Endothelial cell of umbilical vein (primary cell): ENCODE measurements at regions of chr2 and their contacts with region 1.

Region 1: GRCh38 chr2:224837558-224837957 is 121.4 kb upstream of the CCDC195 start:
- DNase-seq: peak; percentile 95
- H3K4me3 ChIP-seq: peak overlapping the region in 1 of 3 experiments; percentile 49
- H3K27ac ChIP-seq: peak overlapping the region; percentile 100
- H3K4me1 ChIP-seq: peaks cover 29% of the 10 kb centered on the region
- H3K27me3 ChIP-seq: no peaks in the 10 kb centered on the region
- CTCF ChIP-seq: peak; percentile 1 to 10
- POLR2A ChIP-seq: peak; percentile 65

Region 2: GRCh38 chr2:224407241-224407701 is 430.3 kb before region 1 on chr2:
- CTCF ChIA-PET with region 1: no interaction called
- POLR2A ChIA-PET with region 1: no interaction called
- dilution Hi-C with region 1: no loop called
- intact Hi-C with region 1: loop called (anchors 1 kb)
- DNase-seq: peak; percentile 100
- H3K4me3 ChIP-seq: no peak overlapping the region
- H3K27ac ChIP-seq: peak overlapping the region; percentile 96
- H3K4me1 ChIP-seq: peaks cover 43% of the 10 kb centered on the region
- H3K27me3 ChIP-seq: no peaks in the 10 kb centered on the region
- CTCF ChIP-seq: no peak
- POLR2A ChIP-seq: peak; percentile 65

Region 3: GRCh38 chr2:224691563-224691962 is 146.0 kb before region 1 on chr2:
- CTCF ChIA-PET with region 1: no interaction called
- POLR2A ChIA-PET with region 1: no interaction called
- dilution Hi-C with region 1: no loop called
- intact Hi-C with region 1: no loop called
- DNase-seq: no peak
- H3K4me3 ChIP-seq: no peak overlapping the region
- H3K27ac ChIP-seq: no peak overlapping the region
- H3K4me1 ChIP-seq: no peaks in the 10 kb centered on the region
- H3K27me3 ChIP-seq: no peaks in the 10 kb centered on the region
- CTCF ChIP-seq: no peak
- POLR2A ChIP-seq: no peak

Region 4: DNA sequence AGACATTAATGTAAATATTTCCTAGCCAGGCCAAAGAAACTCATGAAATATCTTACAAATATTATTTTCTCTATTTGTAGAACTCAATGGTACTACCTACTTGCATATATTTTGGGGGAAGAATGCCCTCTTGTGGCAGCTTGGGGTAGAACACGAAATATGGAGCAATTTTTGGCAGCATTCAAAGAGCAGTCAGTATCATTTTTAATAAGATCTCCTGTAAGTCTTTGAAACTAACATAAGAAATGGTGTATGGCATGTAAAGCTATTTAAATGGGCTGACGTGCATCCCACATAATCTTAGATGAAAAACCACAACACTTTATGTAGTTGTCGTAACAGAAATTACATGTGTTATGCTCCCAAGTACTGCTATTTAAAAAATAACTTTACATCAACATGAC is 59.1 kb before region 1 on chr2:
- CTCF ChIA-PET with region 1: interaction called, 3 read pairs
- POLR2A ChIA-PET with region 1: no interaction called
- dilution Hi-C with region 1: no loop called
- intact Hi-C with region 1: loop called (anchors 1 kb)
- DNase-seq: peak; percentile 83
- H3K4me3 ChIP-seq: no peak overlapping the region
- H3K27ac ChIP-seq: no peak overlapping the region
- H3K4me1 ChIP-seq: no peaks in the 10 kb centered on the region
- H3K27me3 ChIP-seq: no peaks in the 10 kb centered on the region
- CTCF ChIP-seq: peak; percentile 55 to 61
- POLR2A ChIP-seq: no peak

Region 5: GRCh38 chr2:224816816-224817215 is 20.7 kb before region 1 on chr2:
- CTCF ChIA-PET with region 1: interaction called, 18 read pairs
- POLR2A ChIA-PET with region 1: interaction called, 5 read pairs
- dilution Hi-C with region 1: no loop called
- intact Hi-C with region 1: loop called (anchors 1 kb)
- DNase-seq: peak; percentile 62
- H3K4me3 ChIP-seq: no peak overlapping the region
- H3K27ac ChIP-seq: peak overlapping the region; percentile 64
- H3K4me1 ChIP-seq: peaks cover 34% of the 10 kb centered on the region
- H3K27me3 ChIP-seq: no peaks in the 10 kb centered on the region
- CTCF ChIP-seq: no peak
- POLR2A ChIP-seq: no peak

Region 6: DNA sequence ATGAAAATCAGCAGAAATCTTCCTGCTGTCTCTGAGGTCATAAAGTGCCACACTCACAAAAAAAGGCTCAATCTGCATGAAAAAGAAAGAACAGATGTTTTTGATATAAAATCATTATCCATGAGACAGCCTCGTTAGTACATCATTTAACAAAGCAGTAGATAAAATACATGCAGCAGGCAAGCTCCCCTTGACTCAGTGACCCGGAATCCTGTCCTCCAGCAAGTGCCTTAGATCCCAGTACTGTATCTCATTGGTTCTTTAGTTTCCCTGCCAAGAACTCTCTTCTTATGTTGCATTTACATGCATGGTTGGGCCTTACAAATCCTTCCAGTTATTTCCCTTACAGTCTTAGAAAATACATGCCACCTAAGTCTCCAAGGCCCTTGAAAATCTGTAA is 27.5 kb after region 1 on chr2:
- CTCF ChIA-PET with region 1: no interaction called
- POLR2A ChIA-PET with region 1: no interaction called
- dilution Hi-C with region 1: no loop called
- intact Hi-C with region 1: no loop called
- DNase-seq: no peak
- H3K4me3 ChIP-seq: no peak overlapping the region
- H3K27ac ChIP-seq: no peak overlapping the region
- H3K4me1 ChIP-seq: no peaks in the 10 kb centered on the region
- H3K27me3 ChIP-seq: no peaks in the 10 kb centered on the region
- CTCF ChIP-seq: no peak
- POLR2A ChIP-seq: no peak

Region 7: GRCh38 chr2:224875841-224876240 is 38.3 kb after region 1 on chr2:
- CTCF ChIA-PET with region 1: no interaction called
- POLR2A ChIA-PET with region 1: no interaction called
- dilution Hi-C with region 1: no loop called
- intact Hi-C with region 1: no loop called
- DNase-seq: no peak
- H3K4me3 ChIP-seq: no peak overlapping the region
- H3K27ac ChIP-seq: no peak overlapping the region
- H3K4me1 ChIP-seq: no peaks in the 10 kb centered on the region
- H3K27me3 ChIP-seq: no peaks in the 10 kb centered on the region
- CTCF ChIP-seq: no peak
- POLR2A ChIP-seq: no peak

Region 8: GRCh38 chr2:224927646-224928173 is 90.2 kb after region 1 on chr2:
- CTCF ChIA-PET with region 1: no interaction called
- POLR2A ChIA-PET with region 1: no interaction called
- dilution Hi-C with region 1: no loop called
- intact Hi-C with region 1: loop called (anchors 1 kb)
- DNase-seq: peak; percentile 77
- H3K4me3 ChIP-seq: no peak overlapping the region
- H3K27ac ChIP-seq: peak overlapping the region; percentile 87
- H3K4me1 ChIP-seq: peaks cover 34% of the 10 kb centered on the region
- H3K27me3 ChIP-seq: no peaks in the 10 kb centered on the region
- CTCF ChIP-seq: no peak
- POLR2A ChIP-seq: no peak

Region 9: DNA sequence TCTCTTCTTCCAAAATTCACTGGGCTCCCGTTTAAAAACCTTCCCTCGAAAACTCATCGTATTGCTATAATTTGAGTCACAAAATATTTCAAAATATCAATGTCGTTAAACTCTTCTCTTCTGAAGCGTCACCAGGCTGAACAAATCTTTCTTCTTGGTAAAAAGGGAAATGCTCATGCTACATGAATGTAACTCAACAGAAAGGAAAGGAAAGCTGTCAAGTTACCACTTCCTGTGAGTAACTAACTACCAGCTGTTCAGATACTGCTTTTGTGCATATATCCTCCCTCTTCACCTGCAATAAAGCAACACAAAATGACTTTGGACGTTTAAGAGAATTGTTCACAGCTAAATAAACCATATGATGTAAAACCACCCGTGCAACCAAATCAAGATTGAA is 109.3 kb after region 1 on chr2:
- CTCF ChIA-PET with region 1: interaction called, 19 read pairs
- POLR2A ChIA-PET with region 1: interaction called, 4 read pairs
- dilution Hi-C with region 1: no loop called
- intact Hi-C with region 1: loop called (anchors 1 kb)
- DNase-seq: peak; percentile 84
- H3K4me3 ChIP-seq: peak overlapping the region; percentile 13 to 95 (median 93)
- H3K27ac ChIP-seq: peak overlapping the region; percentile 99
- H3K4me1 ChIP-seq: peaks cover 61% of the 10 kb centered on the region
- H3K27me3 ChIP-seq: no peaks in the 10 kb centered on the region
- CTCF ChIP-seq: no peak
- POLR2A ChIP-seq: peak; percentile 71